ENCODE measurements at regions of chr10 and their contacts with region 1.

Region 1: DNA sequence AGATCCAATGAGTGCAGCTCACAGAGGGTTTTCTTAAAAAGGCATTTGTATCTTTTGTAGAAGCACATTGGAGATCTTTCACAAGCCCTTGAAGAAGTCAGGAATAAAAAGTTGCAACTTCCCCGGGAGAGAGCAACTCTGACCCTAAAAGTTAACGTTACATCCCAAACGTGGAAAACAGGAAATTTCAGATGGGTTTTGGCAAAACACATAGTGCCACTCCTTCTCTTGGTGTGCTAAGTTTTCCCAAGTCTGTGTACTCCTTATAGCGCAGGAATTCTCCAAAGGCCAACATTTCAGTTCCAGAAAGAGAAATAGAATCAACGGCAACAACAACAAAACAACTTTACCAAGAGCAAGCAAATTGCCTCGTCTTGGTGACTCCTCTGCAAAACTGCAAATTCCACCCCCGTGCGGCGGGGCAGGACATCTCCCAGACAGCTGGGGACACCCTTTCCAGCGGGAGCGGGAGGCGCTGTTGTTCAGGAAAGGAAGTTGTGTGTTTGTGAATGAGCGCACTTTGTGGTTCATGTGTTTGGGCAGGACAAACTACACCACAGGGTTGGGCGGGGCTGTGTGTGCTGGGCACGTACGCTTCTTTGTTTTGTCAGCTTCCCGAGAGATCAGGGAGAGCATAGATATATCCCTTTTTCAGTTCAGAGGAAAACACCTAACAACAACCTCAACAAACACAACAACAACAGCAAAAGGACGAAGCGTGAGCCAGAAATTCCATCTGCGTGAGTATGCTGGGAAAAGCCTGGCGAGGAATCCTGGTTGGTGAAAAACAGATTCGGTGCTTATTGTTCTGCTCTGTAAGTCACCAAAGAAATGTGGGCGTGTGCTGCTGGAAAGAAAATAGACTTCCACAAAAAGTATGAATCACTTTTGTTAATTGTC is 294.7 kb upstream of the PITRM1 start:
- DNase-seq: peak; percentile 87
- ATAC-seq: peak; percentile 57

Region 2: GRCh38 chr10:3239066-3239919 is 228.0 kb before region 1 on chr10:
- intact Hi-C with region 1: loop called (anchors 5 kb)
- DNase-seq: peak; percentile 89
- ATAC-seq: peak; percentile 77

Region 3: DNA sequence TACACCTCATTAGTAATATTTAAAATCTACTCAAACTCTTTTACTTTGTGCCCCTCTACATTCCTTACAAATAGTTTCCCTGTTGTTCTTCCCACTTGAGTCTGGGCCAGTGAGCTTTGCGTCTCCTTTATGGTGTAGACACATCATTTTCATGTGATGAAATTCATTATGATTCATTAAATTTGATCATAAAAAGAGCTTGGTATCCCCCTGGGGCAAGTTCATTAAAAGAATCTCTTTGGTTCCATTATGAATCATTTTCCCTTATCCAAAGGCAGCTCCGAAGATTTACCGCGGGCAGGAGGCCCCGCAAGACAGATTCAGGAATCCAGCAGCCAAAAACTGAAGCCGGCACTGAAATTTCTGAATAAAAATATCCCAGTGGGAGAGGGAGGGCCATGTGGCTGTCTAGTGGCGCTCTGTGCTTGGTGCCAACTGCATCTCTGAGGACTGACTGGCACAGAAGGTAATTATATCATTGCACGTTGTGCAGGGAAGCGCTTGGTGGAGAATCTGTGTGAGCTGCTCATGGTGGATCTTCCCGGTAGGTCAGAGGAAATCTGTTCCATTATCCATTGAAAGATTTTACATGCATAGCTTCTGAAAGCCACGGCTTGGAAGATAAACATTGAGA is 143.3 kb before region 1 on chr10:
- intact Hi-C with region 1: no loop called
- DNase-seq: no peak
- ATAC-seq: peak; percentile 77

Region 4: DNA sequence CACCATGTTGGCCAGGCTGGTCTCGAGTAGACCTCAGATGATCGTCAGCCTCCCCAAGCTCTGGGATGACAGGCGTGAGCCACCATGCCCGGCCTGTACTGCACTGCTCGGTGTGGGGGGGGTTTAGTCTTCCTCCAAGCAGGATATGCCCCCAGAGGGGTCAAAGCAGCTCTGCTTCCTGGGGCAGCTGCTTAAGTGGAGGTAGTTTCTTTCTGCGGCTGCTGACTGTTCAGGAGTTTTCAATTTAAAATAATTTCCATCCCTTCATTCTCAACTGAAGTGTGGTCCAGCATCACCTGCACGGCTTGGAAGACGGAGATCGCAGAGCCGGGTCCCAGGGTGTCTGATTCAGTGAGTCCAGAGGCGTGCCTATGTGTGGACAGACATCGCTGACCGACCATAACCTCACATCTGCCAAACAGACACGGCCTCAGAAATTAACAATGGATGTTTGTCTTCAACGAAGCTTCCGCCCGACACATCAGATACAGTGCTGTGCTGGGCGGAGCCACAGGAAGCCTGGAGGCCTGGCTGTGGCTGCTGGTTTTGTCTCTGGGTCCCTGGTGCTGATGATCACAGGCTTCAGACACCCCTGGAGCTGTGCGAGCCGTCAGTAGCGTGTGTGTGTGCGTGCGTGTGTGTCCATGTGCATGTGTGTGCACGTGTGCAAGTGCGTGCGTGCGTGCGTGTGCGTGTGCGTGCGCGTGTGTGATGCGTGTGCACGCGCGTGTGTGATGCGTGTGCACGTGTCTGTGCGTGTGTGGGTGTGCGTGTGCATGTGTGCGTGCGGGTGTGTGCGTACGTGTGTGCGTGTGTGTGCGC is 68.3 kb before region 1 on chr10:
- intact Hi-C with region 1: loop called (anchors 5 kb)
- DNase-seq: no peak
- ATAC-seq: peak; percentile 66

Region 5: GRCh38 chr10:4656576-4657182 is 1189.4 kb after region 1 on chr10:
- intact Hi-C with region 1: loop called (anchors 5 kb)
- DNase-seq: peak; percentile 68
- ATAC-seq: no peak